PC-3 (cell line): ENCODE measurements at regions of chr20 and their contacts with region 1.

Region 1: GRCh38 chr20:38057351-38057972 is 23.9 kb downstream of the RPRD1B start:
- DNase-seq: peak; percentile 90
- ATAC-seq: peak; percentile 71
- H3K4me3 ChIP-seq: no peak overlapping the region
- H3K27ac ChIP-seq: peak overlapping the region; percentile 6; the same call in 1 of the 2 replicates
- H3K4me1 ChIP-seq: peaks cover 29% of the 10 kb centered on the region
- H3K27me3 ChIP-seq: no peaks in the 10 kb centered on the region
- CTCF ChIP-seq: peak; percentile 98

Region 2: DNA sequence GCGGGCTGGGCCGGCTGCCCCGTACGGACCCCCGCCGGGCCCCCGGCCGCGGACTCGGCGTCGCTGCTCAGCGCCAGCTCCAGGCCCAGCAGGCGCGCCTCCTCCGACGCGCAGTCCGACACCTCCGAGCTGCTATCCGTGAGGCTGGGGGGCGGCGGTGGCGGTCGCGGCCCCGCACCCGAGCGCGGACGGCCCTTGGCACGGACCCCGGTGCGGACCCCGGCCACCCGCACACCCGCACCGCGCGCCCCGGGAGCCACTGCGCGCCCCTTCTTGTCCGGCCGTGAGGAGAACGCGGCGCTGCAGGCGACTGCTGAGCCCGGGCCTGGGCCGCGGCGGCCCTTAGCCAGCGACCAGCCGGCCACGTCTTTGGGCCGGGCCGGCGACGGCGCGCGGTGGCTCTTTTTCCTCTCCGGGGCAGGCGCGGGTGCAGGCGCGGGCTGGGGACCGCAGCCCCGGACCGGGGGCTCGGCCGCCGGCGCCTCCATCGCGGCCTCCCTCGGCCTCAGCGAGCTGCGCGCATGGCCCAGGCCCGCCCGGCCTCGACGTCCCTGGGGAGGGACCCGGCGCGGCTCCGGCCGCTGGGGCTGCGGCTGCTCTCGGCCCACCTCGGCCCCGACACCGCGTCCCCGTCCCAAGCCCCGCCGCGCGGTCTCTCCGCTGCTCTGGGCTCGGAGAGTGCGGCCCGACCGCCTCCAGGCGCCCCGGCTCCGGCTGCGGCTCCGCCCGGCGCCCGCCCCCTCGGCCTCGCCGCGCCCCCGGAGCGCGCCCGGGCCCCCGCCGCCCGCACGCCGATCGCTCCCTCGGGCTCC is 1194.4 kb before region 1 on chr20:
- CTCF ChIA-PET with region 1: no interaction called
- POLR2A ChIA-PET with region 1: no interaction called
- intact Hi-C with region 1: no loop called
- DNase-seq: no peak
- ATAC-seq: peak; percentile 3
- H3K4me3 ChIP-seq: peak overlapping the region; percentile 81
- H3K27ac ChIP-seq: no peak overlapping the region
- H3K4me1 ChIP-seq: peaks cover 17% of the 10 kb centered on the region
- H3K27me3 ChIP-seq: no peaks in the 10 kb centered on the region
- CTCF ChIP-seq: no peak

Region 3: DNA sequence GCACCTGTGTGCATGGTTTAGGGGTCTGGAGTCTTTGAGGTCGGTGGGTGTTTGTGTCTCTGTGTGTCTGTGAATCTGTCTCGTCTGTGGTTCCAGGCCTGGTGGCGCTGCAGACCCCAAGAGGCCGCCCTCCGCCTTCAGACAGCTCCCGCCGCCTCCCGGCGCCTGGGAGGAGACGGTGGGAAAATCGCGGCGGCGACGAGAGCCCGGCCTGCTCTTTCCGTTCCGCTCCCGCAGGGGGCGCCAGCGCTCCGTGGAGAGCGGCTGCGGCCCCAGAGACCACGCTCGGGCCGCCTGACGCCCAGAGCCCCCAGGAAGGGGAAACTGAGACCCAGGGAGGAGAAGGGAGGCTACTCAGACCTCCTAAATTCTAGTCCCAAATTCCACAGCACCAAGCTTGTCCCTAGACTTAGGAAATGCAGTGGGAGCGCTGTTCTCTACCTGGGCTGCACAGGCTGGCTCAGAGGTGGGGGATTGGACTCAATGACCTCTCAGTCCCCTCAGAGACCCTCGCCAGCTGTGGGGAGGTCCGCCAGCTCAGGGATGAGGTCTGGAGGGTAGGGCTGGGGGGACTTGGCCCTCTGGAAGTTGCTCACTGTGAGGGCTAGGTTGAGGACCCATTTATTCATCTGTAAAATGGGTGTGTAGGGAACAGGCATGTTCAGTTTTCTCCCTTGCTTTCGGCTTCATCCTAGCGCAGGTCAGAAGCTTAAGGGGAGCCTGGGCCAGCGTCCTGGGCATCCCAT is 492.9 kb before region 1 on chr20:
- CTCF ChIA-PET with region 1: no interaction called
- POLR2A ChIA-PET with region 1: no interaction called
- intact Hi-C with region 1: loop called (anchors 10 kb)
- DNase-seq: peak; percentile 70
- ATAC-seq: peak; percentile 80
- H3K4me3 ChIP-seq: peak overlapping the region; percentile 57
- H3K27ac ChIP-seq: no peak overlapping the region
- H3K4me1 ChIP-seq: peaks cover 10% of the 10 kb centered on the region; the same call in 1 of the 2 replicates
- H3K27me3 ChIP-seq: peaks cover 13% of the 10 kb centered on the region; the same call in 1 of the 2 replicates
- CTCF ChIP-seq: peak; percentile 96

Region 4: GRCh38 chr20:37990571-37991151 is 66.8 kb before region 1 on chr20:
- CTCF ChIA-PET with region 1: interaction called, 3 read pairs
- POLR2A ChIA-PET with region 1: no interaction called
- intact Hi-C with region 1: loop called (anchors 5 kb)
- DNase-seq: peak; percentile 98
- ATAC-seq: peak; percentile 88
- H3K4me3 ChIP-seq: no peak overlapping the region
- H3K27ac ChIP-seq: peak overlapping the region; percentile 94
- H3K4me1 ChIP-seq: peaks cover 91% of the 10 kb centered on the region
- H3K27me3 ChIP-seq: no peaks in the 10 kb centered on the region
- CTCF ChIP-seq: no peak

Region 5: DNA sequence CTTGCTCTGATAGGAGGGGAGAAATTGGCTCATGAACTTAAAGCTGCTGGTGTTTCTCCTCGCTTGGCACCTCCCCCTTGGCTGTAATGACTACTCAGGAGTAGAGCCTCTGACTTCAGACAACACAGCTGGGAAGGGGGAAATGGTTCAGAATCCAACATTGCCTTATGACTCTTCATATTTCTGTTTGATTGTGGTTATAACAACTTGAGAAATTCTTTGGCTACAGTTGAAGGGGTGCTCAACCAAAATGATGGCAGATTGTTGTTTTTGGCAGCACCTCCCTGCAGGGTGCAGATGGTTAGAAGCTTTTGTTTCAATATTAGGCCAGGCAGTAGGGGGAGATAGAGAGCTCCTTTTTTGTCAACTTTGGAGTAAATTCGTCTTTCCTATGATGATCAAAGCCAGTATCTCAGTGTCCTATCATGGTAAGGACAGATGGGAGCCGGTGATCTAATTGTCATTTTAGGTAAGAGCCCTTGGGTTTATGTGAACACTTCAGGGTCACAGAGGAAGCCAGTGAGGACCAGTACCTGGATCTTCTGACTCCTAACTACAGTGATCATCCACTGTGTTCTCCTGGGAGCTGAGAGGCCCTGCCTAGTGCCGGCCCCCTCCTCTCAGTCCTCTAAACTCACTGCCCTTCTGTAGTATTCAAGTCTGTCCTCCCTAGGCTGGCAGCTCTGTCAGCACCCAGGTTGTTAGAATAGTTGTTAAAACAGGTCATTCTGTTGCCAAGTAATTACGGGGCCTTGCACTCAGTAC is 16.0 kb after region 1 on chr20:
- CTCF ChIA-PET with region 1: interaction called, 14 read pairs
- POLR2A ChIA-PET with region 1: interaction called, 5 read pairs
- intact Hi-C with region 1: no loop called
- DNase-seq: peak; percentile 93
- ATAC-seq: peak; percentile 82
- H3K4me3 ChIP-seq: no peak overlapping the region
- H3K27ac ChIP-seq: 0 out of 2 replicates have a peak overlapping the region, but pooled peaks have one; percentile 7
- H3K4me1 ChIP-seq: peaks cover 37% of the 10 kb centered on the region
- H3K27me3 ChIP-seq: no peaks in the 10 kb centered on the region
- CTCF ChIP-seq: peak; percentile 93

Region 6: GRCh38 chr20:38152621-38153231 is 95.3 kb after region 1 on chr20:
- CTCF ChIA-PET with region 1: interaction called, 4 read pairs
- POLR2A ChIA-PET with region 1: no interaction called
- intact Hi-C with region 1: loop called (anchors 5 kb)
- DNase-seq: peak; percentile 97
- ATAC-seq: peak; percentile 90
- H3K4me3 ChIP-seq: 0 out of 2 replicates have a peak overlapping the region, but pooled peaks have one; percentile 9
- H3K27ac ChIP-seq: peak overlapping the region; percentile 95
- H3K4me1 ChIP-seq: peaks cover 48% of the 10 kb centered on the region
- H3K27me3 ChIP-seq: no peaks in the 10 kb centered on the region
- CTCF ChIP-seq: no peak

Region 7: DNA sequence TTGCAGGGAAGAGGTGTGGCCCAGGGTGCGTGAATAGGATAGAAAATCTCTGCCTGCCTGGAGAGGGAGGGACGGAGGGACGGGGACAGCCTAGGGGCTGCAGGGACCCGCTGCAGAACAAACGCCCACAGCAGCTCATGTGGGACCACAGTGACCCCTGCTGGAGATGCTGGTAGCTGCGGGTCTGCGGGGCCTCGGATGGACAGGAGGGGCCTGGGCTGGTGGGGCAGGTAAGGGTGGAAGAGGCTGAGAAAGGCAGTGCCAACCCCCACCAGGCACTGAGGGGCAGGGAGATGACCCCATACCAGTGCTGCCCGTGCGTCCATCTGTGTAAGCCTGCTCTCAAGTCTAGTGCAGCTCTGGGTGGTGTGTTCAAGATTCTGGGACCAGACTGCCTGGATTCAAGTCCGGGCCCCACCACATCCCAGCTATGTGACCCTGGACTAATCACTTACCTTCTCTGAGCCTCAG is 163.7 kb after region 1 on chr20:
- CTCF ChIA-PET with region 1: interaction called, 17 read pairs
- POLR2A ChIA-PET with region 1: no interaction called
- intact Hi-C with region 1: loop called (anchors 2 kb)
- DNase-seq: peak; percentile 92
- ATAC-seq: peak; percentile 72
- H3K4me3 ChIP-seq: peak overlapping the region; percentile 14; the same call in 1 of the 2 replicates
- H3K27ac ChIP-seq: peak overlapping the region; percentile 18; the same call in 1 of the 2 replicates
- H3K4me1 ChIP-seq: peaks cover 36% of the 10 kb centered on the region
- H3K27me3 ChIP-seq: no peaks in the 10 kb centered on the region
- CTCF ChIP-seq: peak; percentile 97

Region 8: DNA sequence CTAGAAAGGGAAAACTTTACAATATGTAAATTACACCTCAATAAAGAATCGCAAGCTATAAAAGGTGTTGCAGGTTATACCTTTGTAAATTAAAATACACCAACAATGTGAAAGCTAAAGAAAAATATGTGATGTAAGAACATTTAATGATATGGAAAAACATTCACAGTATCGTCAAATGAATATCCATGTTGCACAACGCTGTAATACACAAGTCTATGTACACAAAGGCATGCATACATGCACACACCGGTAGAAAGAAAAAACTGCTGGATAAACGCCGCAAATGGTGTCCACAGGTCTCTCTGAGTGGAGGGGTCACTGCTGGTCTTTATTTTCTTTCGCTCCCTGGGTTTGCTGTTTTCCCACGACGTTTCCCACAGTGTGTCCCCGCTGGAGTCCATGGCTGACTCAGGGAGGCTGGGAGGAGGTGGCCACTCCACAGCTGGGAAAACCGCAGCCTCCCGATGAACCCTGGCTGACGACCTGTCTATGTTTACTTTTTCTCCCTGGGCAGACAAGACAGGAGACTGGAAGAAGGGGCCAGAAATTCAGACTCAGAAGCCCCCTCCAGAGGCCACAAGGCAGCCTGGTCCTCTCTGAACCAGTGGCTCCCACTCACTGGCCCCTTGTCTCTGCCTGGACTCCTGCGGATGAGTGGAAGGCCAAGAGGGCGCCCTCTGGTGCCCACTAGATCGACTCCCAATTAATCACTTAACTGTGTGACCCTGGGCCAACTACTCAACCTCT is 233.5 kb after region 1 on chr20:
- CTCF ChIA-PET with region 1: no interaction called
- POLR2A ChIA-PET with region 1: no interaction called
- intact Hi-C with region 1: no loop called
- DNase-seq: peak; percentile 58
- ATAC-seq: peak; percentile 86
- H3K4me3 ChIP-seq: peak overlapping the region; percentile 13
- H3K27ac ChIP-seq: no peak overlapping the region
- H3K4me1 ChIP-seq: no peaks in the 10 kb centered on the region
- H3K27me3 ChIP-seq: no peaks in the 10 kb centered on the region
- CTCF ChIP-seq: peak; percentile 85